CD4-positive, alpha-beta T cell (primary cell): ENCODE measurements at regions of chr6 and their contacts with region 1.

Region 1: GRCh38 chr6:33271458-33272274 is at the starts of genes RPS18 and VPS52:
- DNase-seq: peak; percentile 83 to 98 (median 89)
- ATAC-seq: peak; percentile 80
- H3K4me3 ChIP-seq: peak within 1 kb of the TSS; percentile 93
- H3K4me3 Mint-ChIP-seq: peak within 1 kb of the TSS; percentile 96
- H3K27ac ChIP-seq: peak within 1 kb of the TSS; percentile 92
- H3K27ac Mint-ChIP-seq: peak within 1 kb of the TSS; percentile 97
- H3K4me1 ChIP-seq: peaks cover 62% of the 10 kb centered on the region
- H3K4me1 Mint-ChIP-seq: peaks cover 70% of the 10 kb centered on the region
- H3K27me3 ChIP-seq: no peaks in the 10 kb centered on the region
- H3K27me3 Mint-ChIP-seq: no peaks in the 10 kb centered on the region
- CTCF ChIP-seq: no peak
- total RNA-seq, gene RPS18: 5,159 to 5,309 TPM
- total RNA-seq, gene VPS52: 67.9 TPM

Region 2: DNA sequence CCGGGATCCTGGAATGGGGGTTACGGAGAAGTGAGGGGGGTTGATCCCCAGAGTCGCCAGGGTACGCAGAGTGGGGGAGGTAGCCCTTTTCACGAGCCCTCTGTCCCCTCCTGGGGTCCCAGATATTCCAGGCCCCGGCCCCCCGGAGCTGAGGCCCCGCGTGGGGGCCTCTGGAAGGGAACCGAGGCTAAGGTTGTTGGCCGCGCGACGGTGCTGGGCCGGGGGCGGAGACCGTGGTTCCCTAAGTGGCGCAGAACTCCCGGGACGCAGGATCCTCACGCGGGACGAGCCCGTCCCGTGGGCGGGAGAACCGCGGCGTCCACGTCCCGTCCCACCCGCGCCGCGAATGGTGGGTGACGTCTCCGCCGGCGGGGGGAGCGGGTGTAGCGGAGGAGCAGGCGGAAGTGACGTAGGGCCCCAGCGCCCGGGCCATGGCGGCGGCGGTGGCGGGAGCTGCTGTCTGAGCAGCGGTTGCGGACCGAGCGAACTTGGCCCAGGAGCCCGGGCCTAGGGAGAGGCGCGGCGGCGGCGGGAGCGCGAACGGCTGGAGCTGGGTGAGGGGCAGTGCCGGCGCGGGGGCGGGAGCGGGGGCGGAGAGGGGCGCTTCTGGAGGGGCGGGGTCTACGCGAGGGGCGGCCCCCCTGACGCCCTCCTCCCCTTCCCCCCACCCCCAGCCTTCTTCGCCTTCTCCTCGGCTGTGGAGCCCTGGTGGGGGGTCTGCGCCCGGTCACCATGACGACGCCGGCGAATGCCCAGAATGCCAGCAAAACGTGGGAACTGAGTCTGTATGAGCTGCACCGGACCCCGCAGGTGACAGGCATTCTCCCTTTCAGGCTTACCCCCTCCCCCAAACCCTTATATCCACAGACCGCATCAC is 63.3 kb before region 1 on chr6 and contains the start of gene RING1:
- CTCF ChIA-PET with region 1: no interaction called
- POLR2A ChIA-PET with region 1: interaction called, 11 read pairs
- intact Hi-C with region 1: no loop called
- DNase-seq: peak; percentile 76 to 95 (median 84)
- ATAC-seq: peak; percentile 66
- H3K4me3 ChIP-seq: peak within 1 kb of the TSS; percentile 97
- H3K4me3 Mint-ChIP-seq: peak within 1 kb of the TSS; percentile 97
- H3K27ac ChIP-seq: peak within 1 kb of the TSS; percentile 86 to 94
- H3K27ac Mint-ChIP-seq: peak within 1 kb of the TSS; percentile 95
- H3K4me1 ChIP-seq: peaks cover 55% of the 10 kb centered on the region
- H3K4me1 Mint-ChIP-seq: peaks cover 57% of the 10 kb centered on the region
- H3K27me3 ChIP-seq: peaks cover 0 to 6% of the 10 kb centered on the region in 2 experiments
- H3K27me3 Mint-ChIP-seq: peaks cover 13% of the 10 kb centered on the region
- CTCF ChIP-seq: no peak
- total RNA-seq, gene RING1: 27.1 to 28.6 TPM

Region 3: DNA sequence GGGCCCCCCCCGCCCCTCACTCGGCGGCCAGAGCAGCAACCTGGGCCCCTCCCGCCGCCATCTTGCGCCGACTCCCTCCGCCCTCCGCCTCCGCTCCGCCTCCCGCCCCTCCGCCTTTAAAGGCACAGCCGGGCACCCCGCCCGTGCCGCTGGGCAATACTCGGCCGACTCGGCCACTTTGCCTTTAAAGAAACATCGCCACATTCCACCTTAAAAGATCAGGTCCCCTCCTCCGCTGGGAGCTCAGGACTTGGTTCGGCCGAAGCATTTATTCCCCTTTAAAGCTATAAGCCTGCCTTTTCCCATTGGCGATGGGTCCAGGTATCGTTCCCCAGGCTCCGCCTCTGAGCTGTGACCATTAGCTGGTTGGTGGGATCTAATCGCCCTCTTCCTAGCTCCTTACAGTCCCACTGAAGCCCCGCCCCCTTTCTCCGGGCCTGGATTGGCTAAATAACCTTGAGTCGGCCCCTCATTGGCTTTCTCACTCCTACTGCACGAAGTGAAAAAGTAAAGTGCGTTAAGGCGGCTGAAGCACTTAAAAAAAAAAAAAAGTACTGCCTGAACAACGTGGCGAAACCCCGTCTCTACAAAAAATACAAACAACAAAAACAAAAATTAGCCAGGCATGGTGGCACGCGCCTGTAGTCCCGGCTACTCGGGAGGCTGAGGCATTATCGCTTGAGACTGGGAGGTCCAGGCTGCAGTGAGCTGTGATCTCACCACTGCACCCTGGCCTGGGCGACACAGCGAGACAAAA is 46.2 kb after region 1 on chr6 and contains the start of gene ZBTB22:
- CTCF ChIA-PET with region 1: interaction called, 3 read pairs
- POLR2A ChIA-PET with region 1: interaction called, 37 read pairs
- intact Hi-C with region 1: loop called (anchors 5 kb)
- DNase-seq: peak; percentile 90 to 98 (median 95)
- ATAC-seq: peak; percentile 64
- H3K4me3 ChIP-seq: peak within 1 kb of the TSS; percentile 67
- H3K4me3 Mint-ChIP-seq: peak within 1 kb of the TSS; percentile 100
- H3K27ac ChIP-seq: peak within 1 kb of the TSS; percentile 81 to 86
- H3K27ac Mint-ChIP-seq: peak within 1 kb of the TSS; percentile 94
- H3K4me1 ChIP-seq: peaks cover 75% of the 10 kb centered on the region
- H3K4me1 Mint-ChIP-seq: peaks cover 95% of the 10 kb centered on the region
- H3K27me3 ChIP-seq: no peaks in the 10 kb centered on the region
- H3K27me3 Mint-ChIP-seq: no peaks in the 10 kb centered on the region
- CTCF ChIP-seq: no peak
- total RNA-seq, gene ZBTB22: 11.6 to 13.6 TPM

Region 4: GRCh38 chr6:33417903-33418689 is 146.4 kb after region 1 on chr6 and contains the start of gene CUTA:
- CTCF ChIA-PET with region 1: interaction called, 4 read pairs
- POLR2A ChIA-PET with region 1: interaction called, 10 read pairs
- intact Hi-C with region 1: no loop called
- DNase-seq: peak; percentile 97 to 100 (median 98)
- ATAC-seq: peak; percentile 85
- H3K4me3 ChIP-seq: peak within 1 kb of the TSS; percentile 82
- H3K4me3 Mint-ChIP-seq: peak within 1 kb of the TSS; percentile 92
- H3K27ac ChIP-seq: peak within 1 kb of the TSS; percentile 97 to 99
- H3K27ac Mint-ChIP-seq: peak within 1 kb of the TSS; percentile 98
- H3K4me1 ChIP-seq: peaks cover 77% of the 10 kb centered on the region
- H3K4me1 Mint-ChIP-seq: peaks cover 79% of the 10 kb centered on the region
- H3K27me3 ChIP-seq: no peaks in the 10 kb centered on the region
- H3K27me3 Mint-ChIP-seq: no peaks in the 10 kb centered on the region
- CTCF ChIP-seq: peak; percentile 30
- total RNA-seq, gene CUTA: 176 to 185 TPM

Region 5: DNA sequence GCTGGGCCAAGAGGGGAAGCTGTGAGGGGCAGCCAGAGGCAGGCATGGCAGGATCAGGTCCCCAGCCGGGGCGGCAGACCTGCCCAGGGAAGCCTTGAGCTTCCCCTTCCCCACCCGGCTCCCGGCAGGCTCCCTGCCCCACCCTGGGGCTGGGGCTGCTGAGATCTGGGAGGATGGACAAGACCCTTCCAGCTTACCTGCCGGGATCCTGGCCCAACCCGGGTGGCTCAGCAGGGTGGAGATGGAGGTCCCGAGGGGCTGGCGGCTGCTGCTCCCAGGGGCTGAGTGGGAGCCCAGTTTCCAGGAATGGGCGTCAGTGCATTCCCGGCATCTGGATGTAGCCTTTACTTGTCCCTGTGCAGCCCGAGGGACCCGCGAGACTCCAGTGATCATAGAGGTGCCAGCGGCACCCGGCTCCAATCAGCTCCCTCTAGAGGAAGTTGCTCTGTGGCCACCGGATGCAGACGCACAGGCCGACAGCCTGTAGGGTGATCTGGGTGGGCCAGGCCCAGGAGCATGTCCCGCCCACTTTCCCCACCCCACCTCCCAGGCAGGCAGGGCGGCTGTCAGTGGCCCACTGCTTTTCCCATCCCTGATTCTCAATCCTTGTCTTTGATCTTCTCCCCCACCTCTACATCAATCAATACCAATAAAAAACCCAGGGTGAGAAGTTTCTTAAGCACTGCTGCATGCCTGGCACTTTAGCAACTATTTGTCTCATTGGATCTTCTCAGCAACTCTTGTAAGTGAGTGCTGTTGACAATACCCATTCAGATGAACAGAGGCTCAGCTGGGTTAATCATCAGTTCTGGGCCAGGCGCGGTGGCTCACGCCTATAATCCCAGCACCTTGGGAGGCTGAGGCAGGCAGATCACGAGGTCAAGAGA is 308.4 kb after region 1 on chr6 and contains the start of gene BAK1:
- CTCF ChIA-PET with region 1: no interaction called
- POLR2A ChIA-PET with region 1: interaction called, 4 read pairs
- intact Hi-C with region 1: loop called in 1 of 2 experiments (anchors 10 kb)
- DNase-seq: peak; percentile 64 to 92 (median 78)
- ATAC-seq: peak; percentile 93
- H3K4me3 ChIP-seq: peak within 1 kb of the TSS; percentile 99
- H3K4me3 Mint-ChIP-seq: peak within 1 kb of the TSS; percentile 96
- H3K27ac ChIP-seq: peak within 1 kb of the TSS; percentile 82 to 88
- H3K27ac Mint-ChIP-seq: peak within 1 kb of the TSS; percentile 97
- H3K4me1 ChIP-seq: peaks cover 51% of the 10 kb centered on the region
- H3K4me1 Mint-ChIP-seq: peaks cover 44% of the 10 kb centered on the region
- H3K27me3 ChIP-seq: no peaks in the 10 kb centered on the region
- H3K27me3 Mint-ChIP-seq: no peaks in the 10 kb centered on the region
- CTCF ChIP-seq: peak; percentile 63
- total RNA-seq, gene BAK1: 38.3 to 40.8 TPM